Right cardiac atrium (tissue), 5 donors: ENCODE measurements at regions of chr5 and their contacts with region 1.

Region 1: GRCh38 chr5:127757576-127757975 is 54.4 kb downstream of the CCDC192 start:
- DNase-seq: no peak
- ATAC-seq: peak; percentile 78
- H3K4me3 ChIP-seq: no peak overlapping the region
- H3K27ac ChIP-seq: no peak overlapping the region
- H3K4me1 ChIP-seq: no peaks in the 10 kb centered on the region
- H3K27me3 ChIP-seq: no peaks in the 10 kb centered on the region

Region 2: GRCh38 chr5:127564002-127564769 is 193.4 kb before region 1 on chr5:
- intact Hi-C with region 1: loop called in 1 of 4 experiments (anchors 10 kb)
- DNase-seq: no peak
- ATAC-seq: peak; percentile 64 to 76
- H3K4me3 ChIP-seq: no peak overlapping the region
- H3K27ac ChIP-seq: no peak overlapping the region
- H3K4me1 ChIP-seq: no peaks in the 10 kb centered on the region
- H3K27me3 ChIP-seq: no peaks in the 10 kb centered on the region

Region 3: DNA sequence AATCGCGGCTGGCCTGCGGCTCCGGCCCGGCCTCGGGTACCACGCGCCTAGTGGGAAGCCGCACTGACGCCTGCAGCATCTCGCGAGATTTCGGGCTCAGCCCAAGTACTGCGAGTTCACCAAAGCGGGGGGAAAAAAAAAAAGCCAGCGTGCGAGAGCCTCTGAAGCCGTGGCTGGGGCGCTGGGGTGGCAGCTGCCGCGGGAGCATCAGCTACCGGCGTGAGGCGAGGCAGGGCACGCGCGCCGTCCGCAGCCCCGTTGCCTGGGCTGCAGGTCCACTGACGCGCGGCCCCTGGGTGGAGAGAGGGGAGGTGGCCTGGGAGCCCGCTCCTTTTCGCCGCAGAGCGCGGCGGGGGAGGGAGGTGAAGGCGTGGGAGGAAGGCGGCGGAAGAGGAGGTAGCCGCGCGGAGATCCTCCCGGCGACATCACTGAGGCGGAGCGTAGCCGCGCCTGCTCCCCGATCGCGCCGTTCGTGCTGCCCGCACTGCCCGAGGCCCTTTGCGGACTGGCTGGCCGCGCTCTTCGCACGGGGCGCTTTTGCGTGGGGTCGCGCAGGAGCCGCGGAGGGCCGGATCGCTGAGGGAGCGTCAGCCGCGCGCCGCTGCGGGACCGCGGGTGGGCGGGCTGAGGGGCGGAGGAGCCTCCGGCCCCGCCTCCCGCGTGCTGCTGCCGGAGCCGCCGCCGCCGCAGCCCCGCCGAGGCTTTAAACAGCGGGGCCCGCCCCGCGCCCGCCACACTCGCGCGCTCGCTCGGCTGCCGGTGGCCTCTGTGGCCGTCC is 325.6 kb after region 1 on chr5 and contains the start of gene SLC12A2:
- intact Hi-C with region 1: loop called in 1 of 4 experiments (anchors 5 kb)
- DNase-seq: peak; percentile 95 to 98 (median 97)
- ATAC-seq: peak; percentile 94
- H3K4me3 ChIP-seq: peak within 1 kb of the TSS; percentile 91
- H3K27ac ChIP-seq: peak within 1 kb of the TSS; percentile 93
- H3K4me1 ChIP-seq: no peaks in the 10 kb centered on the region
- H3K27me3 ChIP-seq: no peaks in the 10 kb centered on the region
- total RNA-seq, gene SLC12A2: 8.9 to 18.7 (median 10.5) TPM

Region 4: DNA sequence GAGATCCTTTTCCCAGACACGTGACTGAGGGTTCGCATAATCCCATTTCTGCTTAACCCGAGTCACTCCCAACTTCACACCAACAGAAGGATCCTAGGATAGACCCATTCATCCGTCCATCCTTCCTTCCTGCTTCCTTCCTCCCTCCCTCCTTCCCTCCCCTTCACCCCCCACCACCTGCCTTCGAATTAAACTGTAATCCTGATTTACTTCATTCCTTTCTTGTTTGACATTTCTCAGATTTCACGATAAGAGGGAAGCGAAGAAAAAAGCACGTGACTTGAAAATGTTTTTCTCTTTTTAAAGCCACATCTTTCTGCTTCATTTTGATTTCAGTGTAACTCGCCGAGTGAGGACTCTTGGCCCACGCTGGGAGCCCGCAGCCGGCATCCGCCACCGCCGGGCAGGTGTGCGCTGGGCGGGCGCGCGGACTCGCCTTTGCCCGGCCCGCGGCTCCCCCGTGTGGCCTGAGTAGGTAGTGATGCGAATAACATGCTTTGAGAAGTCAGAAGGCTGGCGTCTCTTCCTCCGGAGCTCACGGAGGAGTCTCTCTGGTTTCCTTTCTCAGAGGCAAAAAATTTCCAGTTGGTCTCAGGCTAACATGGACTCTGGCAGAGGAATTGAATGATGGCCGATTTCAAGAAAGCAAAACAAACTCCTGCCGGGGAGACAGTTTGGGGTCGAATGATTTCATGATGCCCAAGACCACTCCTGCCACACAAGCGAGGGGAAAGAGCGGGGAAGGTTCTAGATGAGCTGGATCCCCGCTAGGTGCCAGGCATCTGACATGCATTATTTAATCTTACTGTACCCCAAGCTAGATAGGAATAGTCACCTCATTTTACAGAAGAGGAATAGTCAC is 443.7 kb after region 1 on chr5:
- intact Hi-C with region 1: loop called in 3 of 4 experiments (anchors 5 to 10 kb)
- DNase-seq: peak; percentile 74 to 94 (median 87)
- ATAC-seq: peak; percentile 81 to 87
- H3K4me3 ChIP-seq: peak overlapping the region; percentile 27
- H3K27ac ChIP-seq: no peak overlapping the region
- H3K4me1 ChIP-seq: no peaks in the 10 kb centered on the region
- H3K27me3 ChIP-seq: no peaks in the 10 kb centered on the region